MCF 10A (cell line): ENCODE measurements at regions of chr22 and their contacts with region 1.

Region 1: GRCh38 chr22:43346521-43346929 is 3.4 kb upstream of the SCUBE1 start:
- DNase-seq: peak; percentile 48
- H3K4me3 Mint-ChIP-seq: no peak overlapping the region
- H3K27ac Mint-ChIP-seq: no peak overlapping the region
- H3K4me1 Mint-ChIP-seq: no peaks in the 10 kb centered on the region
- H3K27me3 Mint-ChIP-seq: peaks cover 67% of the 10 kb centered on the region
- CTCF ChIP-seq: peak; percentile 70

Region 2: GRCh38 chr22:42720263-42721044 is 626.1 kb before region 1 on chr22 and contains the start of gene A4GALT:
- CTCF ChIA-PET with region 1: no interaction called
- POLR2A ChIA-PET with region 1: no interaction called
- intact Hi-C with region 1: no loop called
- DNase-seq: no peak
- H3K4me3 Mint-ChIP-seq: peak within 1 kb of the TSS; percentile 73
- H3K27ac Mint-ChIP-seq: peak within 1 kb of the TSS; percentile 47
- H3K4me1 Mint-ChIP-seq: peaks cover 19% of the 10 kb centered on the region
- H3K27me3 Mint-ChIP-seq: no peaks in the 10 kb centered on the region
- CTCF ChIP-seq: no peak
- total RNA-seq, gene A4GALT: 8.7 and 12.3 TPM in 2 replicates

Region 3: GRCh38 chr22:42978453-42979103 is 367.9 kb before region 1 on chr22:
- CTCF ChIA-PET with region 1: no interaction called
- POLR2A ChIA-PET with region 1: no interaction called
- intact Hi-C with region 1: no loop called
- DNase-seq: peak; percentile 66
- H3K4me3 Mint-ChIP-seq: no peak overlapping the region
- H3K27ac Mint-ChIP-seq: peak overlapping the region; percentile 25
- H3K4me1 Mint-ChIP-seq: peaks cover 27% of the 10 kb centered on the region
- H3K27me3 Mint-ChIP-seq: no peaks in the 10 kb centered on the region
- CTCF ChIP-seq: no peak

Region 4: DNA sequence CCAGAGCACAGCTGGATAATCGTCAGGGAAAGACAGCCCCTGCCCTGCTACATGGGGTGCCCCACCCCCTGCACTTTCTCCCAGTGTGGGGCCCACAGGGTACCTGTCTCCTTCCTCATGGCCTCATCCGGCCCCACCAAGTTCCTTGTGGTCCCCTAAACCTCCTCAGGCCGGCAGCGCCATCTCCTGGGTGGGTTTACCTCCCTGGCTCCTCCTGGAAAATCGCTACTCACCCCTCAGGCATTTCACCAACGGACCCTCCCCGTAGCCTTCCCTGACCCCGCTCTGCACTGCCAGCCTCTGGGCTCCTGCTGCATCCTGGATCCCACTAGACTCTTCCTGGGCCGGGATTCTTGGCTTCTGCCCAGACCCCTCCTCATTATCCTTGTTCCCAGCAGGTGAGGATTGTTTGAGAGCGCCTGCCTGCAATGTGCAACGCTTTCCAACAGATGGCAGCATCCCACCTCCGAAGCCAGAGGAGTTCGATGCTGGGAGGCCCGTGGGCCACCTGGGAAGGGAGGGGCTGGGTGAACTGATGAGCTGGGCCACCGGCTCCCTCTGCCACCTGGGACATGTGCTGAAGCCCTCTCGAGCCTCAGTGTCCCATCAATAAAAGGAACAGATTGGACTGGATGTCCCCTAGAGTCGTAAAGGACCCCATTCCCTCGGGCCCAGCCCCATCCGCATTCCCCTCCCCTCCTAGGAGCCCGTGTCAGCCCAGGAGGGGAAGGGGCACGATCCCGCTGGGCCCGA is 115.4 kb before region 1 on chr22:
- CTCF ChIA-PET with region 1: interaction called, 9 read pairs
- POLR2A ChIA-PET with region 1: no interaction called
- intact Hi-C with region 1: loop called (anchors 1 kb)
- DNase-seq: peak; percentile 65
- H3K4me3 Mint-ChIP-seq: no peak overlapping the region
- H3K27ac Mint-ChIP-seq: no peak overlapping the region
- H3K4me1 Mint-ChIP-seq: peaks cover 12% of the 10 kb centered on the region
- H3K27me3 Mint-ChIP-seq: peaks cover 43% of the 10 kb centered on the region
- CTCF ChIP-seq: peak; percentile 94

Region 5: DNA sequence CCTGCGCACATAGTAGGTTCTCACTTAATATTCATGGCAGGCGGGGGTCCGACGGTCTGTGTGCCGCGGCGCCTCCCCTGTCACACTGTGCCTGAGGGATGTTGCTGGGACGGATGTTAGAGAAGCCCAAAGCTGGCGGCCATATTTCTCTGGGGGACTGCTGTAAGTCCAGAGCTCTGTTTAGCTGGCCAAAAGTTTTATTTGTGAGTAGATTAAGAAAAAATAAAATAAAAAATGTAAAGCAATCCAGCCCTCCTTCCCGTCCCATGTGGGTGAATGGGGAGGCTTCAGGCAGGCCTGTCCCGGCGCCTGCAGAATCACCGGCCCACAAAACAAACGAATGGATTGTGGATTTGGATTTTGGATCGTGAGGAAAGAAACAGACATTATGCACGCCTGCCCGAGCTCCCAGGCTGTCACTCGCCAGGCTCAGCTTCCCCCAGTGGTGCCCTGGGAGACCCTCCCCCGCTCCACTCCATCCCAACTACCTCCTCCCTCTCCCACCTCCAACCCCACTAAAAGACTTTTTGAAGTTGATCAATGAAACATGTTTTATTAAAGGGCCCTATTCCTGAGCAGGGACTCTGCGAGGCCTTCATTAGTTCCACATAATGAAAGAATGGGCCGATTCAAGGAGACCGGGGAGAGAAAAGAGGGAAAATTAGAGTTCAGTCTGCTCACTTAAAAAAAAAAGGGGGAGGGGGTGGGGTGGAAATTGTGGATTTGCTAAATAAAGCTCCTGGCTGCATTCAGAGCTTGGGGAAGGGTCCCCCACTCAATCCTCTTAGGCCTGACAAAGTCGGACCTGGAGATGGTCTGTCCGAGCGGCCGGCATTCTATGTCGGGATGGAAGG is 17.0 kb after region 1 on chr22:
- CTCF ChIA-PET with region 1: interaction called, 12 read pairs
- POLR2A ChIA-PET with region 1: no interaction called
- intact Hi-C with region 1: no loop called
- DNase-seq: no peak
- H3K4me3 Mint-ChIP-seq: no peak overlapping the region
- H3K27ac Mint-ChIP-seq: no peak overlapping the region
- H3K4me1 Mint-ChIP-seq: no peaks in the 10 kb centered on the region
- H3K27me3 Mint-ChIP-seq: peaks cover 80% of the 10 kb centered on the region
- CTCF ChIP-seq: no peak

Region 6: DNA sequence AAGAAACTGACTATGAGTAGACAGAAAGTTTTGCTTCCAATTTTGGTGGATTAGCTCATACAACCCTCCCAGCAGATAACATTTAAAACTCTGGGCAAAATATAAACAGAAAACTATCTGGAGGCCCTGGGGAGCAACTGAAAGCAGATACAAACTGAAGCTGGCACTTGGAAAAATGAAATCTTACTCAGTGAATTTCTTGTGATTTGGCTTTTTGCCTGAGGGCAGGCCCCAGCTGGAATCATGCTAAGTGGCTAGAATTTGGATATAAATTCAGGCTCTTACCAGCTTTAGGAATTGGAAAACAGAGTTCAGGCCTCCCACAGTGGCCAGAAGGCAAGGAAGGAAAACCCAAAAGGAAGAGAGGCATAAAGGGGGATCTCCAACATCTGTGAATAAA is 379.8 kb after region 1 on chr22:
- CTCF ChIA-PET with region 1: no interaction called
- POLR2A ChIA-PET with region 1: no interaction called
- intact Hi-C with region 1: no loop called
- DNase-seq: no peak
- H3K4me3 Mint-ChIP-seq: no peak overlapping the region
- H3K27ac Mint-ChIP-seq: no peak overlapping the region
- H3K4me1 Mint-ChIP-seq: no peaks in the 10 kb centered on the region
- H3K27me3 Mint-ChIP-seq: peaks cover 37% of the 10 kb centered on the region
- CTCF ChIP-seq: no peak